HCT116 (cell line): ENCODE measurements at regions of chr4 and their contacts with region 1.

Region 1: GRCh38 chr4:139229534-139230039 is 50.4 kb downstream of the MGARP start:
- DNase-seq: peak; percentile 50
- ATAC-seq: peak; percentile 81
- H3K4me3 ChIP-seq: no peak overlapping the region; a peak in 1 of 4 replicates
- H3K27ac ChIP-seq: no peak overlapping the region
- H3K4me1 ChIP-seq: peaks cover 2 to 9% of the 10 kb centered on the region in 2 experiments; a peak in 3 of 4 replicates
- H3K27me3 ChIP-seq: no peaks in the 10 kb centered on the region
- CTCF ChIP-seq: peak; percentile 67 to 71 (median 69); a peak in 5 of 6 replicates
- POLR2A ChIP-seq: no peak
- RAD21 ChIP-seq: peak; percentile 71

Region 2: GRCh38 chr4:138686106-138686835 is 543.3 kb before region 1 on chr4:
- CTCF ChIA-PET with region 1: no interaction called
- POLR2A ChIA-PET with region 1: no interaction called
- RAD21 ChIA-PET with region 1: no interaction called
- intact Hi-C with region 1: no loop called
- DNase-seq: no peak
- ATAC-seq: no peak
- H3K4me3 ChIP-seq: no peak overlapping the region
- H3K27ac ChIP-seq: no peak overlapping the region
- H3K4me1 ChIP-seq: no peaks in the 10 kb centered on the region
- H3K27me3 ChIP-seq: no peaks in the 10 kb centered on the region
- CTCF ChIP-seq: no peak
- POLR2A ChIP-seq: no peak
- RAD21 ChIP-seq: no peak

Region 3: DNA sequence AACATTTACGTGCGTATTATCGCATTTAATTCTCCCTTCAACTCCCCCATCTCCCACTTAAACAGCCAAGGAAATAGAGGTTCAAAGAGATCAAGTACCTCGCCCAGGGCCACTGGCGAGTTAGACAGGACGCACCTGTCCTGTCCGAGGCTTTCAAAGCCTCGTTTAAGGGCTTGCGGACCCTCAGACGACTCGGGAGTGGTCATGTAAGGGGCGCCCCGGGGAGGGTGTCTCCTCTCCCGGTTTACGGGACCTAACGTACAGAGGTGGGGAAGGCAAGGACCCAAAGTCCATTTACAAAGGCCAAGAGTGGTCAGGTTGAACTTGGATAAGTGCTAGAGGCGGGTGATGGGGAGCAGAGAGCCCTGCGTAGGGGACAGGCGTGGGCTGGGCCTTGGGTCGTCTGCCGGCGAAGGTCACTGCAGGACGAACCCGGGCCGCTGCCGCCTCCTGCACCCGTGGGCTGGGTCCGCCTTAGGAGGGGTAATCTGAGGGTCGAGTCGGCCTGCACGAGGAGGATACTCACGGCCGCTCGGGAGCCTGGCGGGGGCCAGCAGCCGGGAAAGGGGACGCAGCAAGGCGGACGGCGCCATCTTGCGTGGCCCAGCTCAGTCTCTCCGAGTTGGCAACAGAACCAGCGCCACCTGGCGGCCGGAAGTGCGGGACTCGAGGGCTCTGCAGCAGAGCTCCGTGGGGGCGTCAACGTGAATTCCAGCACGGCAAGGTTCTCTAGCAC is 65.8 kb after region 1 on chr4:
- CTCF ChIA-PET with region 1: interaction called, 4 read pairs
- POLR2A ChIA-PET with region 1: interaction called, 4 read pairs
- RAD21 ChIA-PET with region 1: interaction called in 1 of 2 experiments, 3 read pairs
- intact Hi-C with region 1: loop called (anchors 1 kb)
- DNase-seq: peak; percentile 82
- ATAC-seq: peak; percentile 95
- H3K4me3 ChIP-seq: peak overlapping the region; percentile 89 to 99
- H3K27ac ChIP-seq: peak overlapping the region; percentile 71
- H3K4me1 ChIP-seq: peaks cover 13 to 28% of the 10 kb centered on the region in 2 experiments
- H3K27me3 ChIP-seq: no peaks in the 10 kb centered on the region
- CTCF ChIP-seq: peak in 2 of 3 experiments; percentile 82 to 91; a peak in 4 of 6 replicates
- POLR2A ChIP-seq: peak; percentile 75
- RAD21 ChIP-seq: no peak